Activated naive CD4-positive, alpha-beta T cell treated with anti-CD3 and anti-CD28 coated beads for 36 hours (primary cell): ENCODE measurements at regions of chr2 and their contacts with region 1.

Region 1: DNA sequence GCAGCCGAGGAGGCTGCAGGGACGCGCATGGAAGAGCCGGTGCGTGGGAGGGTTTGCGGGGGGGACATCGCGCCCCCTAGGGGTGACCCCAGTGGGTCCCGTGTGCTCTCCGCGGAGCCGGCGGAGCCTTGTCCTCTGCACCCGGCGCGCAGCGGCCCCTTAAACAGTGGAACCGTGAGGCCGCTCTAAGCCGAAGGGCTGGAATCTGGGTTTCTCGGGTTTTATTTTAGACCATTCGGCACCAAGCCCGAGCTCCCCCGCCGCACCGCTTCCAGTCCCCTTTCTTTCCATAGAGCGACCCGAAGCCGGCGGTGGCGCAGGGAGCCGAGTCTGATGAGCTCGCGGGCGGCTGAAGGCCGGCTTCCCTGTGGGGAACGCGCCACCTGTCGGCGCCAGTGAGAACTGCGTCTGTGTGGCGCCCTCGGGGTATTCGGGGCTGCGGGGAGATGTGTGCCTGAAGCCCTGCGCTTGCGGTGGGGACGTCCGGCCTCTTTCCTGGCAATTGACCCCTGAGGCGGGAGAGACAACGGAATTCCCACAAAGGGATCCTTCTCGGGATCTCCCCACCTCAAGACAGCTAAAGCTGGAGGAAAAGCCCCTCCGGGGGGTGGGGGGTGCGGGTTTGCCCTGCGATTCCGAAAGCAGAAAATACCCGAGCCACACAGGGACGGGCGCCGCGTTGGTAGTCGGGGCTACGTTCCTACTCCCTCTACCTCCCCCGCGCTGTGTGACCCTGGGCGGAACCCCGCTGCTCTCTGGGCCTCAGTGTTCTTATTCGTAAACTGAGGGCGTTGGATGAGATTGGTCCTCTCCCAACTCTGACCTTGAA is 8.2 kb upstream of the EN1 start:
- DNase-seq: peak; percentile 86
- H3K4me3 Mint-ChIP-seq: peak overlapping the region; percentile 55
- H3K27ac Mint-ChIP-seq: no peak overlapping the region
- H3K4me1 Mint-ChIP-seq: peaks cover 33% of the 10 kb centered on the region
- H3K27me3 Mint-ChIP-seq: peaks cover 71% of the 10 kb centered on the region

Region 2: GRCh38 chr2:118032169-118033013 is 823.3 kb before region 1 on chr2:
- CTCF ChIA-PET with region 1: interaction called, 3 read pairs
- intact Hi-C with region 1: loop called (anchors 1 kb)
- DNase-seq: peak; percentile 69
- H3K4me3 Mint-ChIP-seq: no peak overlapping the region
- H3K27ac Mint-ChIP-seq: no peak overlapping the region
- H3K4me1 Mint-ChIP-seq: no peaks in the 10 kb centered on the region
- H3K27me3 Mint-ChIP-seq: peaks cover 42% of the 10 kb centered on the region

Region 3: DNA sequence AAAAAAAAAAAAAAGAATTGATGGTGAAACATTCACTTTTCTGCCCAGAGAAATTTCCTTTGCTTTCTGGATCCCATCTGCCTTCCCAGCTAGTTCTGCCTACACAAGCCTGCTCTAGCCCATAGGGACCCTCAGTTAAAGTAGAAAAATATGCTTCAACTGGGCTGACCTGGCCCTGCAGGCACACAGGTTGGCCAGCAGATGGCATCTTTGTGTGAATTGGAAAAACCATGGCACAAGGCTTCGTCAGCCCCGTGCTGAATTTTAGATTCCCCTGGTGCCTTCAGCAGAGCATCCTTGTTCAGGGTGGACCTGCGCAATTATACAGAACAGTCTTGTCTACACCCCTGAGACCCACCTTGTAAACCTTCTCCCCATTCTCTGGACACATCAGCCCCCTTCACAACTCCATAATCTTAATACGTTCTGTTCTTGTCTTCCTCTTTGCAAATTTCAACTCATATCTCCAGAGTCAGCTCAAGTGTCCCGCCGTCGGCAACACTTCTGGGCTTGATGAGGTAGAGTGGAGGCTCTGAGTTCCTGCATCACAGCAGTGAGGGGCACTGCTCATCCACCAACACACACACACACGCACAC is 652.9 kb before region 1 on chr2:
- CTCF ChIA-PET with region 1: no interaction called
- intact Hi-C with region 1: loop called (anchors 1 kb)
- DNase-seq: peak; percentile 74
- H3K4me3 Mint-ChIP-seq: peak overlapping the region; percentile 7
- H3K27ac Mint-ChIP-seq: no peak overlapping the region
- H3K4me1 Mint-ChIP-seq: peaks cover 2% of the 10 kb centered on the region
- H3K27me3 Mint-ChIP-seq: peaks cover 19% of the 10 kb centered on the region

Region 4: GRCh38 chr2:118309946-118310680 is 545.6 kb before region 1 on chr2:
- CTCF ChIA-PET with region 1: no interaction called
- intact Hi-C with region 1: loop called (anchors 5 kb)
- DNase-seq: peak; percentile 69
- H3K4me3 Mint-ChIP-seq: peak overlapping the region; percentile 79
- H3K27ac Mint-ChIP-seq: peak overlapping the region; percentile 90
- H3K4me1 Mint-ChIP-seq: peaks cover 2% of the 10 kb centered on the region
- H3K27me3 Mint-ChIP-seq: no peaks in the 10 kb centered on the region

Region 5: GRCh38 chr2:118431165-118431517 is 424.5 kb before region 1 on chr2:
- CTCF ChIA-PET with region 1: no interaction called
- intact Hi-C with region 1: loop called (anchors 1 kb)
- DNase-seq: no peak
- H3K4me3 Mint-ChIP-seq: no peak overlapping the region
- H3K27ac Mint-ChIP-seq: no peak overlapping the region
- H3K4me1 Mint-ChIP-seq: no peaks in the 10 kb centered on the region
- H3K27me3 Mint-ChIP-seq: peaks cover 16% of the 10 kb centered on the region

Region 6: DNA sequence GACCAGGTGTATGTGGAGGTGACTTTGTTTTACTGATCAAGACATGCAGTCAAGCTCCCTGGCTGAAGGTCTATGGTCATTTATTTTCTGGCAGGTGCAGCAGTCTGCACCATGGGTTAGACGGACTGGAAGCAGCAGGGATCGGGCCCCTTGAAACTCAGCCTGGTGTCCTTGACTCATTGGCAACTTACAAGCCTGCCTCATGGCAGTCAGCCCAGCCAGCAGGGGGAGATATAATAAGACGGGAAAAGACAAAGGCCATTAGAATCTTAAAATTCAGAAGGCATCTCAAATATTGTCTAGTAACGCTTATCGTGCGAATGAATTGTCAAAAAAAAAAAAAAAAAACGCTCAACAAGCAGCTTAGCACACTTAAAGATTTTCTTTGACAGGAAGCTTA is 316.4 kb before region 1 on chr2:
- CTCF ChIA-PET with region 1: interaction called, 3 read pairs
- intact Hi-C with region 1: loop called (anchors 2 kb)
- DNase-seq: peak; percentile 13
- H3K4me3 Mint-ChIP-seq: no peak overlapping the region
- H3K27ac Mint-ChIP-seq: no peak overlapping the region
- H3K4me1 Mint-ChIP-seq: no peaks in the 10 kb centered on the region
- H3K27me3 Mint-ChIP-seq: peaks cover 12% of the 10 kb centered on the region

Region 7: GRCh38 chr2:118835746-118836410 is 19.8 kb before region 1 on chr2:
- CTCF ChIA-PET with region 1: interaction called, 6 read pairs
- intact Hi-C with region 1: loop called (anchors 2 kb)
- DNase-seq: no peak
- H3K4me3 Mint-ChIP-seq: peak overlapping the region; percentile 34
- H3K27ac Mint-ChIP-seq: no peak overlapping the region
- H3K4me1 Mint-ChIP-seq: peaks cover 11% of the 10 kb centered on the region
- H3K27me3 Mint-ChIP-seq: peaks cover 85% of the 10 kb centered on the region